ENCODE measurements at regions of chr10 and their contacts with region 1.

Region 1: DNA sequence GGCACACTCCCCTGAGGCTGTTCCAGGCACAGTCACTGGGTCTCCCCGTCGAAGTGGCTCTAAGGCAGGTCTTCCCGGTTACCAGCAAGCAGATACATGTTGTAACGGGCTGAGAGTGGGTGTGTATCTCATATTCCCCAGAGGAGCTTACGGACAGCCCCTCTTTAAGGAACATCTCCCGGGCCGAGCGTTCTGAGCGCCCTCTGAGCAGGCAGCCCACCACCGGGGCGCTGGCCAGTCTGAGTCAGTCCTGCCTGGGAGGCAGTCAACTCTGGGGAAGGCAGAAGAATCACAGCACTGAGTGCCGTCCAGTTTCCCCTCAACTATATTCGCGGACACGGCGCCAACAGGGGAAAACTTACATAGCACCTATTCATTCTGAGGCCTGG is 117.4 kb downstream of the LHPP start:
- DNase-seq: no peak
- H3K4me3 ChIP-seq: no peak overlapping the region
- H3K27ac ChIP-seq: no peak overlapping the region
- H3K4me1 ChIP-seq: no peaks in the 10 kb centered on the region
- H3K27me3 ChIP-seq: no peaks in the 10 kb centered on the region
- CTCF ChIP-seq: no peak

Region 2: GRCh38 chr10:124601431-124602120 is 22.6 kb after region 1 on chr10:
- CTCF ChIA-PET with region 1: interaction called, 13 read pairs
- POLR2A ChIA-PET with region 1: no interaction called
- intact Hi-C with region 1: no loop called
- DNase-seq: no peak
- H3K4me3 ChIP-seq: no peak overlapping the region
- H3K27ac ChIP-seq: no peak overlapping the region
- H3K4me1 ChIP-seq: no peaks in the 10 kb centered on the region
- H3K27me3 ChIP-seq: no peaks in the 10 kb centered on the region
- CTCF ChIP-seq: no peak

Region 3: GRCh38 chr10:124614003-124614659 is 35.1 kb after region 1 on chr10:
- CTCF ChIA-PET with region 1: no interaction called
- POLR2A ChIA-PET with region 1: interaction called, 18 read pairs
- intact Hi-C with region 1: no loop called
- DNase-seq: no peak
- H3K4me3 ChIP-seq: no peak overlapping the region
- H3K27ac ChIP-seq: peak overlapping the region; percentile 61
- H3K4me1 ChIP-seq: peaks cover 25% of the 10 kb centered on the region
- H3K27me3 ChIP-seq: no peaks in the 10 kb centered on the region
- CTCF ChIP-seq: no peak

Region 4: DNA sequence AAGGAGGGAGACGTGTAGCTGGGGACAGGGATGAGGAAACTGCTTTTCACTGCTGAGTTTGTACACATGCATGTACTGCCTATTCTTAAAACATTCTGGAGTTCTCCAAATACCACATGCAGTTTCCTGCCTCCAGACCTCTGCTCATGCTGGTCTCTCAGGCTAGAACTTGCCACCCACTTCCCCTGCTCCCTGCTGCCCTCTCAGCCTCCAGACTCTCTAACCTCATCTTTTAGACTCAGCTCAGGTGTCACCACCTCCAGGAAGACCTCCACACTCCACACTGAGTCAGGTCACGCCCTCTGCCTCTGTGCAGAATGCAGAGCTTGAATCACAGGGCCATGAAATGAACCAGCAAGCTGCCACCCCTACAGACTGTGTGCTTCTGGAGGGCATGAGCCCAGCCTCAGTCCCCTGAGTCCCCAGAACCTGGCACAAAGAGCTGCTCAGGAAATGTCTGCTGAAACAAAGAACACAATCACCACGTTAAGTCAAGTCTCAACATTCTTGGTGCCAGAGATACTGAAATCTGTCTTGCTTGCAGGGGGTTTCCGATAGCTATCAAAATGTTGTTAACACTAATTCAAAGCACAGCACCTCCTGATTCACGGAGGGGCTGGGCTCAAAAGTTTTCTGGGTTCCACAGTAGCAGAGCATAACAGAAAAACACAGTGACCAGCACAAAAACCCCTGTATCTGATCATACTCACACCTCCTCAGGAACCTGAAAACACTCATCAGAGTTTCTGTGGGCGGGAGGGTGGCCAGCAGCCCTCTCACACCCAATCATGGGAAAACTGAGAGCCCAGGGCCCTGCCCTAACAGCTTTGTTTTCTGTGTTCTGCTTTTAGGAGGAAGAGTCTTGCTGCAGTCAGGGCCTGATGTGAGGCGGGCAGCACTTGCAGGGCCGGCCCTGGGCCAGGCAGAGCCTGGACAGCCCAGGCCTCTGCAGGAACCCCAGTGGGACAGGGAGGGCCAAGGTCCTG is 144.1 kb after region 1 on chr10:
- CTCF ChIA-PET with region 1: no interaction called
- POLR2A ChIA-PET with region 1: no interaction called
- intact Hi-C with region 1: no loop called
- DNase-seq: no peak
- H3K4me3 ChIP-seq: no peak overlapping the region
- H3K27ac ChIP-seq: no peak overlapping the region
- H3K4me1 ChIP-seq: peaks cover 11% of the 10 kb centered on the region; the same call in 1 of the 2 replicates
- H3K27me3 ChIP-seq: no peaks in the 10 kb centered on the region
- CTCF ChIP-seq: no peak

Measured in PC-9 (cell line).